Gastrocnemius medialis (tissue), 4 donors: ENCODE measurements at regions of chr3 and their contacts with region 1.

Region 1: GRCh38 chr3:71064288-71064955 is 519.1 kb downstream of the FOXP1 start:
- DNase-seq: peak in 1 of 2 donors; percentile 9
- ATAC-seq: peak; percentile 20 to 28
- H3K4me3 ChIP-seq: peak overlapping the region; percentile 58 to 83 (median 72)
- H3K27ac ChIP-seq: peak overlapping the region; percentile 86 to 91 (median 89)
- H3K4me1 ChIP-seq: peaks cover 49 to 52% of the 10 kb centered on the region in 2 donors
- H3K27me3 ChIP-seq: no peaks in the 10 kb centered on the region
- CTCF ChIP-seq: peak in 3 of 5 experiments; percentile 8 to 20 (median 18)
- POLR2A ChIP-seq: peak; percentile 45 to 64

Region 2: DNA sequence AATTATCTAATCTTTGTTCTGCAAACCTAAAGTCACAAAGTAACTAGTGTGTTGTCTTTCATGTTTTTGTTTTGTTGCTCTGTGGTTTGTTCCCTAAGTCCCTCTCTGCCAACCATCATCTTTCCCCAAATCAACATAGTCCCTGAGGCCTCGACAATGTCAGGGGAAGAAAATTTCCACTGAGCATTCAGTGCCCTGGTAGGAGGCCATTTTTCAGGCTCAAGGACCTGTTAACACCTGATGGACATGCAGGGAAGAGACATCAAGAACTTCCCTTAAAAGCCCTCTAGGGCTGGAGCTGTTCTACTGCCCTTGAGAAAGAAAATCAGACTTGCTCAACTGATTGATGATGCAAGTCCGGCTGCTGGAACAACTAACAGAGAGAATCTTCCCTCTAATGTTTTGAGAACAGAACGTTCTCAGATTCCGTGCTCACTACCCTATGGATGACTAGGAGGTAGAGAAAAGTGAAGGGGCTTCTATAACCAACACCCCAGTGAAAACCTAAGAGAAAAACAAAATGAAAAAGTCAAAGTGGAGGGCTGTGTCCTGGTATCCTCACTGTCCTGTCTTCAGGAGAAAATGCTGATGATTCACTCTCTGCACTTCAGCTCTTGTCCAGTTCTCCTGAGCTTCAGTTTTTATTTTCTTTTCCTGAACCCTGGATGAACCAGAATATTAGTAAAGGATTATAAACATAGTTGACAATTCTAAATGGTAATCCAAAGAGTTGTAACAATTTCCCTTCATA is 146.0 kb after region 1 on chr3:
- in situ Hi-C with region 1: no loop called
- intact Hi-C with region 1: loop called (anchors 5 kb)
- DNase-seq: peak; percentile 69 to 83
- ATAC-seq: peak; percentile 92 to 98
- H3K4me3 ChIP-seq: peak overlapping the region in 1 of 4 donors; percentile 14
- H3K27ac ChIP-seq: peak overlapping the region; percentile 71 to 82 (median 77)
- H3K4me1 ChIP-seq: peaks cover 27 to 29% of the 10 kb centered on the region in 2 donors
- H3K27me3 ChIP-seq: no peaks in the 10 kb centered on the region
- CTCF ChIP-seq: peak in 2 of 5 experiments; percentile 37 to 42
- POLR2A ChIP-seq: peak in 1 of 2 donors; percentile 18

Region 3: GRCh38 chr3:71397046-71397445 is 332.6 kb after region 1 on chr3:
- in situ Hi-C with region 1: no loop called
- intact Hi-C with region 1: loop called (anchors 10 kb)
- DNase-seq: no peak
- ATAC-seq: peak in 1 of 2 donors; percentile 55
- H3K4me3 ChIP-seq: no peak overlapping the region
- H3K27ac ChIP-seq: no peak overlapping the region
- H3K4me1 ChIP-seq: peaks cover 5 to 7% of the 10 kb centered on the region in 2 donors
- H3K27me3 ChIP-seq: no peaks in the 10 kb centered on the region
- CTCF ChIP-seq: peak in 4 of 5 experiments; percentile 11 to 66 (median 50)
- POLR2A ChIP-seq: no peak